ENCODE measurements at regions of chr6 and their contacts with region 1.

Region 1: DNA sequence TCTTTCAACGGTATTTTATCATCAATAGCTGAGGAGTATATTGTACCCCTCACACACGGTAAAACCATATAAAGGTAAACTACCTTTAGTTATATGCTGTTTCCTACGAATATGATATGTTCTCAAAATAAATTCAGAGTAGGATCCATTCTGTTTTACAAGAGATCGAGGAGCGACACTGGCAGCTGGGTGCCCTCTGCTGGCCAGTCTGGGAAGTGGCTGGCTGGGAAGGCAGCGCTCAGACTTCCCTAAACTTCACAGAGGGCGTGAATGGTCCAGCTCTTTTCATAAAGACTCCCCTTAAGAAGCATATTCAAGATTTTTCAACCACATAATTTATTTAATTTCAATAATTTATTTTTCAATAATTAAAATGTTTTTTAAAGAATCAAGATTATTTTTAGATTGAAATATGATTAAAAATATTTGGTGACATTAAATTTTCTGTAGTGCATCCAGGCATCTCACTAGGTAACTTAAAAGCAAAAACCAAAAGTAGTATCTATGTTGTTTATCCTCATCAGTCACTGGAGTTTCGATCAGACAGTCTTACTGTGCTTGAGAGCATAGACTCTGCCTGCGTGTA is 187.5 kb upstream of the PDE10A start:
- DNase-seq: no peak
- H3K4me3 ChIP-seq: no peak overlapping the region
- CTCF ChIP-seq: peak; percentile 98

Region 2: DNA sequence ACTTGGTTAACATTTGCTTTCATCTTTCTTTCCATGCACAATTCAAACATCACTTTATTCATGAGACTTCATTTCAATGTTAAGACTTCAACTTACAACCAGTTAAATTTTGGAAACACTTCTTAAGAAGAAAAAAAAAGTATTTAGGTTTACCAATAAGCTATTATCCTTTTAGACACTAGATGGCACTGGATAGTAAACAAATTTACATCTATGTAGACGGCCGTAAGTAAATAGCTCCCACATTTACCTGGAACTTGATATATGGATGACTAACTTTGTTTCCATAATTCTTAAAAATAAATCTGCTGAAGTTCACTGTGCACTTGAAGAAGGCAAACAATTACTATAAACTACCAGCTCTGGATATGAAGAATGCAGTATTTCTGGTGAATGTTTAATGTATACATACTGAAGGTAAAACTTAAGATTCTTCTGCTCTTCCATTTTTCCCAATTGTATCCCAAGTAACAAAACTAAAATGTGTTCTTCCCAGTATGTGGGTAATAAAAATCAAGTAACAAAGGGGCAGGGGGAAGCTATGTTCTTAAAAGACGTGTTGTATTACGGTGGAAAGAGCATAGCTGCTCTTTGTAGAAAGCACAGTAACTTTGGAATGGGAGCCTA is 410.5 kb before region 1 on chr6:
- CTCF ChIA-PET with region 1: interaction called, 17 read pairs
- POLR2A ChIA-PET with region 1: no interaction called
- DNase-seq: no peak
- H3K4me3 ChIP-seq: no peak overlapping the region
- CTCF ChIP-seq: peak; percentile 15

Region 3: GRCh38 chr6:165819394-165819793 is 31.1 kb before region 1 on chr6:
- CTCF ChIA-PET with region 1: no interaction called
- POLR2A ChIA-PET with region 1: no interaction called
- DNase-seq: no peak
- H3K4me3 ChIP-seq: no peak overlapping the region
- CTCF ChIP-seq: no peak

Region 4: DNA sequence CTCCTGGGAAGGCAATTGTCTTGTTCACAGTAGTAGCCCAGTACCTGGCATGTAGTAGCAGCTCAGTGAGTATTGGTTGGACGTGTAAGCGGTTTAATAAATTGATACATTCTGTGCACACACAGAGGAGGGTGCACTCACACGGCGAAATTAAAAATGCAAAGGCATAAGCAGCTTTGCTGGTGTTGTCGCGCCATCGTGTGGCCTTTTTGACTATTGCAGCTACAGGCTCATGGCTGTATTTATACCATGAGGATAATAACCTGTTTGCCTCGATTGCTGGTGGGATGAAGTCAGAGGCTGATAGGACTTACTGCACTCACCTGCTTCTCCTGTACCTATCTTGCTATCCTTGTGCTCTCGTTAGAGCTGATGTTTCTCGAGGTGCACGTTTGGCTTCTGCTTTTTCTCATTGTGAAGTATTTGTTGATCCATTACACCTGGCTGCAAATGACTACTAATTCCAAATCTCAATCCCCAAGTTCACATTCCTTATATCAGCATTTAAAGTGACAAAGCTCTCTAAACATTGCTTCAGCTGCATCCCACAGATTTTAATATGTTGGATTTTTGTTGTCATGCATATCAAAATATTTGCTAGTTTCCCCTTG is 255.7 kb after region 1 on chr6:
- CTCF ChIA-PET with region 1: interaction called, 10 read pairs
- POLR2A ChIA-PET with region 1: no interaction called
- DNase-seq: peak; percentile 10
- H3K4me3 ChIP-seq: no peak overlapping the region
- CTCF ChIP-seq: peak; percentile 84